Mucosa of descending colon (tissue), 3 donors: ENCODE measurements at regions of chr2 and their contacts with region 1.

Region 1: GRCh38 chr2:113138428-113139322 is 11.3 kb downstream of the IL1RN start:
- DNase-seq: peak in 2 of 3 donors; percentile 41 to 90
- ATAC-seq: peak; percentile 81
- H3K4me3 ChIP-seq: no peak overlapping the region
- H3K4me1 ChIP-seq: no peaks in the 10 kb centered on the region
- CTCF ChIP-seq: peak; percentile 61

Region 2: DNA sequence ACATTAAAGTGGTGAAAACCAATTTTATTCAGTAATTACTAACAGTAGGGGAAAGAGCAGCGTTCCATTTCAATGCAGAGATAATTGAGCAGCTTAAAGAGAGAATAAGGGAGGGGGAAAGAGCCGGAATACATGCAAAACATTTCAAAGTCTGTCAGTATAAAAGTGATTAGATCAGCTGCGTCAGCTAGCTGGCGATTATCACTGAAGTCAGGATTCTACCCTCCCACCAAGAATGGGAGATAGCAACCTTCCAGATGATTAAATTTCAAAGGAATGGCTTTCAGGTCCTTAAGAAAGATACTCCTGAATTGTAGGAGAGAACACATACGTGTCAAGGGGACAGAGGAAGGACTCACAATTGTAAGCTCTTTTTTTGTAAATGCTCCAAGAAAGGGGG is 866.0 kb before region 1 on chr2:
- intact Hi-C with region 1: no loop called
- DNase-seq: no peak
- ATAC-seq: no peak
- H3K4me3 ChIP-seq: no peak overlapping the region
- H3K4me1 ChIP-seq: peaks cover 4% of the 10 kb centered on the region
- CTCF ChIP-seq: no peak

Region 3: DNA sequence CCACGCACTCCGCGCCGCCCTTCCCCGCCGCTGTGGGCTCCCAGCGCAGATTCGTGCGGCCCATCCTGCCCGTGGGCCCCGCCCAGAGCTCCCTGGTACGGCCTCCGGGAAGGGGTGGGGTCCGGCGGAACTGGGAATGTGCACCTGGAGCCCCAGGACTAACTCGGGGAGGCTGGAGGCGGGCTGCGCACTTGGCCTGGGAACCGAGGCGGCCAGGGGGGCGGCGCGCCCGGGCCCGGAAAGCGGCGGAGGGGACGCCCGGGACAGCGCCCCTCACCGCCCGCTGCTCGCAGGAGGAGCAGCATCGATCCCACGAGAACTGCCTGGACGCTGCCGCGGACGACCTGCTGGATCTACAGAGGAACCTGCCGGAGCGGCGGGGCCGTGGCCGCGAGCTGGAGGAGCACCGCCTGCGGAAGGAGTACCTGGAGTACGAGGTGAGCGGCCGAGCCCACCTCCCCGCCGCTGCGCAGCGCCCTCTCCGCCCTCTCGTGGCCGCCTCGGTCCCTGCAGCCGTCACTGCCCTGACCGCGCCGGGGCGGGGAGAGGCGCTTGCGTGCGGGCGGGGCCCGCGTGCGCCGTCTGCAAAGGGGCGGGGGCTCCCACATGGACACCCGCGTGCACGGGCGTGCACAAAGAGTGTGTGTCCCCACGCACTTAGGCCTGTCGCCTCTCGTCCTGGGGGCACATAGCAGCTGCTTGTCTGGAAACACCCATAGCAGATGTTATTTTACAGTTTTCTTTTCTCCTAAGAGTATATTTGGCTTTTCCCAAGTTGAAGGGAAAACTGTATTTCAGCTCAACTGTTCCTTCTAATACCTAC is 60.3 kb after region 1 on chr2:
- intact Hi-C with region 1: loop called in 1 of 2 experiments (anchors 5 kb)
- DNase-seq: peak; percentile 87 to 94 (median 90)
- ATAC-seq: peak; percentile 95
- H3K4me3 ChIP-seq: peak overlapping the region; percentile 34
- H3K4me1 ChIP-seq: peaks cover 10% of the 10 kb centered on the region
- CTCF ChIP-seq: peak; percentile 85

Region 4: DNA sequence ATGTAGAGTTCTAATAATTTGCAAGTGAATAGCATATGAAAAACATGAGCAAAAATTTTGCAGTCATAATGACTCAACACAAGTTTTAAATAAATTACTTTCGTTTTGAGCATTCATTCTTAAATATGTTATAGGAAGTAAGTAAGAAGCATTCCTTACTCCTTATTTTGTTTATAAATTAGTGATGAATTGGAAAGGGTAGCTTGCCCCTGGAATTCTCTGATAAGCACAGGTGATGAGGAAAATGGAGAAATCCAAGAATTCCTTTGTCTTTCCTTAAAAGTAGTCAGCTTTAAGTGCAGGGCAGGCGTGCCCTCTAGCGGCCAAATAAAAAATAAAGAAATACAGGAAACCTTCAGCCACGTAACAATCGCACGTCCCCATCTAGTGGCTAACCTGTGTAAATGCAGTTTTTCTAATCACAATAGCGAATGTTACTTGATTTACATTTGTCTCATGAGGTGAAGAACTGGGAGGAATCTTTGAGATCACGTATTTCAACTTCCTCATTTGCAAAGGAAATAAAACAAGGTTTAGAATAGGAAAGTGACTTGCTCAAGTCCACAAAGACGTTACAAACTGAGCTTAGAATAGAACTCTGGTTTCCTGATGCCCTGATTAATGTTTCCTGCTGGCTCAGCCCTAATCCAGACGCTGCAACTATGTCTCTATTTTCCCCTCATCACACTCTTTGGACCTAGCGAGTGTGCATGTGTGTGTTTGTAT is 251.6 kb after region 1 on chr2:
- intact Hi-C with region 1: no loop called
- DNase-seq: peak in 1 of 3 donors; percentile 83
- ATAC-seq: peak; percentile 99
- H3K4me3 ChIP-seq: no peak overlapping the region
- H3K4me1 ChIP-seq: no peaks in the 10 kb centered on the region
- CTCF ChIP-seq: no peak